HepG2 (cell line): ENCODE measurements at regions of chr5 and their contacts with region 1.

Region 1: GRCh38 chr5:121706686-121707085 is 145.0 kb upstream of the FTMT start:
- DNase-seq: no peak
- ATAC-seq: no peak
- H3K4me3 ChIP-seq: no peak overlapping the region
- H3K27ac ChIP-seq: no peak overlapping the region
- H3K4me1 ChIP-seq: no peaks in the 10 kb centered on the region
- H3K27me3 ChIP-seq: no peaks in the 10 kb centered on the region
- CTCF ChIP-seq: no peak
- EP300 ChIP-seq: no peak
- POLR2A ChIP-seq: no peak
- RAD21 ChIP-seq: no peak

Region 2: DNA sequence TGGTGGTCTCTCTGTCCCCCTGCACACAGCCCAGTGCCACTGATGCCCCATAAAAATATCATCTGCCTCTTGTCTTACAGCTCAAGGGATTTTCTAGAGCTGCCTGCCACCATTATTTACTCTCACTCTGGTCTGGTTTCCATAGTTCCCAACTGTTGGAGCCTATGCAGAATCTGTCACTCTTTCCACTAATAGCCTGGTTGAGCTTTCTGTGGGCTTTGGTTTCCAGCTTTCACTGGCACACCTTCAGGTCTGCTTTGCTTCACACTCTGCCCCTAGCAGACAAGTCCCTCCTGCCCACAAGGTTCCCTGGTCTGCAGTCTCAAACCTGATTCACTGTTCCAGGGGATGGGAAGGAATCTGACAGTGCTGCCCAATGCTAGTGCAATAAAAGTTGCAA is 42.0 kb after region 1 on chr5:
- CTCF ChIA-PET with region 1: no interaction called
- POLR2A ChIA-PET with region 1: no interaction called
- in situ Hi-C with region 1: no loop called
- intact Hi-C with region 1: loop called (anchors 1 kb)
- DNase-seq: no peak
- ATAC-seq: no peak
- H3K4me3 ChIP-seq: no peak overlapping the region
- H3K27ac ChIP-seq: no peak overlapping the region
- H3K4me1 ChIP-seq: no peaks in the 10 kb centered on the region
- H3K27me3 ChIP-seq: no peaks in the 10 kb centered on the region
- CTCF ChIP-seq: no peak
- EP300 ChIP-seq: no peak
- POLR2A ChIP-seq: no peak
- RAD21 ChIP-seq: no peak

Region 3: DNA sequence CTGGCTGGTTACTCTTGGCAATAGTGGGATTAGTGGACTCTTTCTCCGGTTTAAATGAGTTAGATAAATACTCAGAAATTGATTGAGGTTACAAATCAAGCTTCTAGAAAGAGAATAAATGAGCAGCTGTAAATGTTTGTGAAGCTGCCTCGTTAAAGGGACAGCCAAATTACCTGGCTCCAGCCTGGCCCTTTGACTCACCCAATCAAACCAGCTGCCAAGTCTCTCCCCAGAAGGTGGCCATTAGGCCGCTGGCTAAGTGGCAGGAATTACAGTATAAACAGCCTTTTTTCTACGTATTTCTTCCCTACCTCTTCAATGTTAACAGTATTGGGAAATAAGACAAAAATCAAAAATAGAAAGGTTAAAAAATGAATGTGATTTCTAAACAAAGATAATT is 209.1 kb after region 1 on chr5:
- CTCF ChIA-PET with region 1: no interaction called
- POLR2A ChIA-PET with region 1: no interaction called
- in situ Hi-C with region 1: no loop called
- intact Hi-C with region 1: no loop called
- DNase-seq: no peak
- ATAC-seq: no peak
- H3K4me3 ChIP-seq: no peak overlapping the region
- H3K27ac ChIP-seq: no peak overlapping the region
- H3K4me1 ChIP-seq: no peaks in the 10 kb centered on the region
- H3K27me3 ChIP-seq: no peaks in the 10 kb centered on the region
- CTCF ChIP-seq: no peak
- EP300 ChIP-seq: no peak
- POLR2A ChIP-seq: no peak
- RAD21 ChIP-seq: no peak